GM12878 (cell line): ENCODE measurements at regions of chr16 and their contacts with region 1.

Region 1: GRCh38 chr16:48632137-48632774 is 22.3 kb upstream of the N4BP1 start:
- DNase-seq: no peak
- ATAC-seq: peak; percentile 57
- H3K4me3 ChIP-seq: no peak overlapping the region
- H3K27ac ChIP-seq: no peak overlapping the region
- H3K4me1 ChIP-seq: peaks cover 4% of the 10 kb centered on the region
- H3K27me3 ChIP-seq: no peaks in the 10 kb centered on the region
- CTCF ChIP-seq: no peak
- EP300 ChIP-seq: no peak
- POLR2A ChIP-seq: no peak
- RAD21 ChIP-seq: no peak

Region 2: GRCh38 chr16:48164907-48165726 is 467.1 kb before region 1 on chr16:
- CTCF ChIA-PET with region 1: interaction called, 16 read pairs
- POLR2A ChIA-PET with region 1: no interaction called
- RAD21 ChIA-PET with region 1: interaction called, 10 read pairs
- SMC1A ChIA-PET with region 1: interaction called, 3 read pairs
- in situ Hi-C with region 1: no loop called
- intact Hi-C with region 1: no loop called
- DNase-seq: no peak
- ATAC-seq: peak; percentile 98
- H3K4me3 ChIP-seq: no peak overlapping the region
- H3K27ac ChIP-seq: no peak overlapping the region
- H3K4me1 ChIP-seq: peaks cover 8% of the 10 kb centered on the region; the same call in 1 of the 2 replicates
- H3K27me3 ChIP-seq: no peaks in the 10 kb centered on the region
- CTCF ChIP-seq: peak; percentile 88 to 94 (median 90)
- EP300 ChIP-seq: no peak
- POLR2A ChIP-seq: no peak
- RAD21 ChIP-seq: peak; percentile 93

Region 3: GRCh38 chr16:48295499-48296281 is 336.6 kb before region 1 on chr16:
- CTCF ChIA-PET with region 1: interaction called, 8 read pairs
- POLR2A ChIA-PET with region 1: no interaction called
- RAD21 ChIA-PET with region 1: interaction called, 3 read pairs
- SMC1A ChIA-PET with region 1: no interaction called
- in situ Hi-C with region 1: no loop called
- intact Hi-C with region 1: loop called (anchors 5 kb)
- DNase-seq: no peak
- ATAC-seq: no peak
- H3K4me3 ChIP-seq: no peak overlapping the region
- H3K27ac ChIP-seq: no peak overlapping the region
- H3K4me1 ChIP-seq: no peaks in the 10 kb centered on the region
- H3K27me3 ChIP-seq: no peaks in the 10 kb centered on the region
- CTCF ChIP-seq: no peak
- EP300 ChIP-seq: no peak
- POLR2A ChIP-seq: no peak
- RAD21 ChIP-seq: no peak

Region 4: GRCh38 chr16:48353565-48354163 is 278.6 kb before region 1 on chr16:
- CTCF ChIA-PET with region 1: interaction called, 42 read pairs
- POLR2A ChIA-PET with region 1: no interaction called
- RAD21 ChIA-PET with region 1: interaction called, 32 read pairs
- SMC1A ChIA-PET with region 1: interaction called, 28 read pairs
- in situ Hi-C with region 1: loop called (anchors 5 kb)
- intact Hi-C with region 1: loop called (anchors 1 kb)
- DNase-seq: peak; percentile 37
- ATAC-seq: peak; percentile 94
- H3K4me3 ChIP-seq: no peak overlapping the region
- H3K27ac ChIP-seq: no peak overlapping the region
- H3K4me1 ChIP-seq: peaks cover 5% of the 10 kb centered on the region
- H3K27me3 ChIP-seq: no peaks in the 10 kb centered on the region
- CTCF ChIP-seq: peak; percentile 86 to 93 (median 91)
- EP300 ChIP-seq: no peak
- POLR2A ChIP-seq: no peak
- RAD21 ChIP-seq: peak; percentile 88

Region 5: GRCh38 chr16:48535831-48536613 is 96.2 kb before region 1 on chr16:
- CTCF ChIA-PET with region 1: interaction called, 14 read pairs
- POLR2A ChIA-PET with region 1: no interaction called
- RAD21 ChIA-PET with region 1: interaction called, 13 read pairs
- SMC1A ChIA-PET with region 1: interaction called, 8 read pairs
- in situ Hi-C with region 1: no loop called
- intact Hi-C with region 1: no loop called
- DNase-seq: peak; percentile 72
- ATAC-seq: peak; percentile 85
- H3K4me3 ChIP-seq: no peak overlapping the region
- H3K27ac ChIP-seq: peak overlapping the region; percentile 73
- H3K4me1 ChIP-seq: peaks cover 24% of the 10 kb centered on the region
- H3K27me3 ChIP-seq: no peaks in the 10 kb centered on the region
- CTCF ChIP-seq: no peak
- EP300 ChIP-seq: peak; percentile 71 to 76; a peak in 3 of 4 replicates
- POLR2A ChIP-seq: no peak; the same call in 1 of the 2 replicates
- RAD21 ChIP-seq: 0 out of 2 replicates have a peak, but pooled peaks have one; percentile 7

Region 6: DNA sequence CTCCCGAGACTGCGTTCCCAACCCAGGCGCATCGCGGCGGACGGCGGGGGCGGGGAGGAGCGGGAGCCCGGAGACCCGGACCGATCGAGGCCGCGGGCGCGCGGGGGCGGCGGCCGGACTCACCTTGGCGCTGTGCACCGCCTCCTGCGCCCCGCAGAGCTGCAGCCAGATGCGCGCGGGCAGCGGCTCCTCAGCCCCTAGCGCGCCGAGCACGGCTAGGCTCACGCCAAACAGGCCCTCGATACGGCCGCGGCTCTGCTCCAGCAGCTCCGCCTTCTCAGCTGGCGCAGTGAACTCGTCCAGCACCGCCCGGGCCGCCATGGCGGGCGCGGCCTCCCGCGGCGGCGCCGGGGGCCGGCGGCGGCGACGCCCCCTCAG is 22.6 kb before region 1 on chr16:
- CTCF ChIA-PET with region 1: interaction called, 21 read pairs
- POLR2A ChIA-PET with region 1: no interaction called
- RAD21 ChIA-PET with region 1: interaction called, 6 read pairs
- SMC1A ChIA-PET with region 1: interaction called, 3 read pairs
- in situ Hi-C with region 1: no loop called
- intact Hi-C with region 1: no loop called
- DNase-seq: no peak
- ATAC-seq: peak; percentile 46
- H3K4me3 ChIP-seq: peak overlapping the region; percentile 90
- H3K27ac ChIP-seq: peak overlapping the region; percentile 97
- H3K4me1 ChIP-seq: peaks cover 46% of the 10 kb centered on the region
- H3K27me3 ChIP-seq: no peaks in the 10 kb centered on the region
- CTCF ChIP-seq: no peak
- EP300 ChIP-seq: no peak
- POLR2A ChIP-seq: peak; percentile 75
- RAD21 ChIP-seq: no peak